ENCODE measurements at regions of chr14 and their contacts with region 1.

Region 1: DNA sequence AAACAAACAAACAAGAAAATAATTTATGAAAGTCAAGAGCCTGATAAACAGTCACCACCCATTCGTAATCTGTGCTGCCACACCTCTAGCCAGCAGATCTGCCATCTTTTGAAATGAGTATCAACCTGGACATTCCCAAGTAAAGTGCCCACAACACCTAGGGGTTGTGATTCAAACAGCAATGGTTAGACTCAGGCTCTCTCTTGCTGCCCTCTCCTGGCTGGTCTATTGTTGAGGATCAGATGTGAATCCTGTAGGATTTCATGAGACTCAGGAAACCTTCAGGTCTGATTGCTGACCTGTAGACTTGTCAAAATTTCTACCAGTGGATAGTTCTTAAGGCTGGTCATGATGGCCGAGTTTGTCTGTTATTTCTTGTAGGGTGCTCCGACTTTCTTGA is 26.8 kb downstream of the DGLUCY start:
- DNase-seq: no peak
- H3K4me3 ChIP-seq: no peak overlapping the region
- H3K27ac ChIP-seq: no peak overlapping the region
- H3K4me1 ChIP-seq: peaks cover 0 to 18% (median 17%) of the 10 kb centered on the region in 4 donors
- H3K27me3 ChIP-seq: no peaks in the 10 kb centered on the region
- CTCF ChIP-seq: no peak

Region 2: GRCh38 chr14:91060351-91061055 is 80.2 kb before region 1 on chr14 and contains the start of gene RPS6KA5:
- intact Hi-C with region 1: loop called (anchors 10 kb)
- DNase-seq: peak; percentile 100
- H3K4me3 ChIP-seq: peak within 1 kb of the TSS; percentile 77 to 81
- H3K27ac ChIP-seq: peak within 1 kb of the TSS; percentile 95 to 96
- H3K4me1 ChIP-seq: peaks cover 0 to 13% (median 5%) of the 10 kb centered on the region in 4 donors
- H3K27me3 ChIP-seq: no peaks in the 10 kb centered on the region
- CTCF ChIP-seq: peak; percentile 13 to 44

Measured in tibial artery (tissue), 4 donors.